ENCODE measurements at regions of chr6 and their contacts with region 1.

Region 1: DNA sequence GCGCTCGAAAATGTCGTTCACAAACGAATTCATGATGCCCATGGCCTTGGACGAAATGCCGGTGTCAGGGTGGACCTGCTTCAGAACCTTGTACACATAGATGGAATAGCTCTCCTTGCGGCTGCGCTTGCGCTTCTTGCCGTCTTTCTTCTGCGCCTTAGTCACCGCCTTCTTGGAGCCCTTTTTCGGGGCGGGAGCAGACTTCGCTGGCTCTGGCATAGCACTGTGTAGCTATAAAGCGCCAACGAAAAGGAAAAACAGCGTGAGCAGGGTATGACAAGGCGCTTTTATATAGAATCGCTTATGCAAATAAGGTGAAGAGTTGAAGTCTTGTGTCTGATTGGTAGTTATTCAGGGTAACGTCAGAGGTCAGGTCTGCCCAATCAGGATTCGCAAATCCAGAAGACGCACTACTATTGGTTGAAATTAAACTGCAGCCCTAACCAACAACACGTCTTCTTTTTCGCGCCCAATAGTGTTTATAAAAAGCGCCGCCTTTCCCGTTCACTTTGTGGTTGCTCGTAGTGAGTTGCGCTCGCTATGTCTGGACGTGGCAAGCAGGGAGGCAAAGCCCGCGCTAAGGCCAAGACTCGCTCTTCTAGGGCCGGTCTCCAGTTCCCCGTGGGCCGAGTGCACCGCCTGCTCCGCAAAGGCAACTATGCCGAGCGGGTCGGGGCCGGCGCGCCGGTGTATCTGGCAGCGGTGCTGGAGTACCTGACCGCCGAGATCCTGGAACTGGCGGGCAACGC is 114.8 kb upstream of the PRSS16 start:
- H3K4me3 Mint-ChIP-seq: no peak overlapping the region
- H3K27ac Mint-ChIP-seq: no peak overlapping the region
- H3K4me1 Mint-ChIP-seq: peaks cover 9% of the 10 kb centered on the region
- H3K27me3 Mint-ChIP-seq: peaks cover 2% of the 10 kb centered on the region

Region 2: GRCh38 chr6:26025894-26026832 is 1106.5 kb before region 1 on chr6:
- intact Hi-C with region 1: loop called (anchors 10 kb)
- H3K4me3 Mint-ChIP-seq: peak overlapping the region; percentile 80
- H3K27ac Mint-ChIP-seq: peak overlapping the region; percentile 91
- H3K4me1 Mint-ChIP-seq: peaks cover 15% of the 10 kb centered on the region
- H3K27me3 Mint-ChIP-seq: no peaks in the 10 kb centered on the region

Region 3: DNA sequence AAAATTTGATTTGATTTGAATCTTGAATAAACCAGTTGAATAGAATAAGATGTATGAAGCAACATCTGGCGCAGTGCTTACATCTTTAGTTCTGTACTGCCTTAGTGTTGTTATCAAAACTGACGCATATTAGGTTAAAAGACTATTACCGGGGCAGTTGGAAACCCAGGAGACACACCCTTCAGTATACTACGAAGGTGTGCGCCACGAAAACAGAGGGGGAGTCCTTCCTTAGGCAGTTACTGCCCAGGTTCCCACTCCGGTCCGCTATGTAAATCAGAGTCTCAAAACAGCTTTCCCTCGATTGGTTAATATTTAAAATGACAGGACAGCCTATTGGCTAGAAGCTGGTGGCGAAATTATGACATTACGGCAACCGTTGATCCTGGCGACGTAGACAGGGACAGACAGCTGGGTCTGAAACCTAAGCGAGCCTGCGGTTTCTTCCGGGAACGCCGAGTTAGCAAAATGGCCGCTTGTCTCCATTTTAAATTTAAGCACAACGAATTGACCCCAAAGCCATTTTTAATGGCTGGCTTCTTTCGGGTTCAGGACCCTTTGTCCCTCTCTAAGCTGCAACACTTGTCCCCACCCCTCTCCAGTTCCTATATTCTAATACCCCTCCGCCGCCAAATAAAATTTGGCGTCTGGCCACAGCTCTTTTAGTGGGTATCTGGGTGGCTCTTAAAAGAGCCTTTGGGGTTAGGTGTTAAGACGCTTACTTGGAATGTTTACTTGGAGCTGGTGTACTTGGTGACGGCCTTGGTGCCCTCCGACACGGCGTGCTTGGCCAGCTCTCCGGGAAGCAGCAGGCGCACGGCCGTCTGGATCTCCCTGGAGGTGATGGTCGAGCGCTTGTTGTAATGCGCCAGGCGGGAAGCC is 1009.7 kb before region 1 on chr6:
- intact Hi-C with region 1: loop called (anchors 5 kb)
- H3K4me3 Mint-ChIP-seq: peak overlapping the region; percentile 95
- H3K27ac Mint-ChIP-seq: peak overlapping the region; percentile 100
- H3K4me1 Mint-ChIP-seq: peaks cover 23% of the 10 kb centered on the region
- H3K27me3 Mint-ChIP-seq: no peaks in the 10 kb centered on the region

Region 4: GRCh38 chr6:27146706-27147505 is 14.2 kb after region 1 on chr6:
- intact Hi-C with region 1: loop called (anchors 1 kb)
- H3K4me3 Mint-ChIP-seq: no peak overlapping the region
- H3K27ac Mint-ChIP-seq: no peak overlapping the region
- H3K4me1 Mint-ChIP-seq: peaks cover 5% of the 10 kb centered on the region
- H3K27me3 Mint-ChIP-seq: no peaks in the 10 kb centered on the region

Region 5: GRCh38 chr6:27809939-27810767 is 677.4 kb after region 1 on chr6:
- intact Hi-C with region 1: loop called (anchors 1 kb)
- H3K4me3 Mint-ChIP-seq: peak overlapping the region; percentile 81
- H3K27ac Mint-ChIP-seq: peak overlapping the region; percentile 95
- H3K4me1 Mint-ChIP-seq: peaks cover 27% of the 10 kb centered on the region
- H3K27me3 Mint-ChIP-seq: peaks cover 2% of the 10 kb centered on the region

Measured in dendritic cell treated with granulocyte-macrophage colony-stimulating factor and Interleukin-4, amounts not matched to agents 40 ng/mL and 50 ng/mL, for 4 days (primary cell).